Caco-2 (cell line): ENCODE measurements at regions of chr5 and their contacts with region 1.

Region 1: DNA sequence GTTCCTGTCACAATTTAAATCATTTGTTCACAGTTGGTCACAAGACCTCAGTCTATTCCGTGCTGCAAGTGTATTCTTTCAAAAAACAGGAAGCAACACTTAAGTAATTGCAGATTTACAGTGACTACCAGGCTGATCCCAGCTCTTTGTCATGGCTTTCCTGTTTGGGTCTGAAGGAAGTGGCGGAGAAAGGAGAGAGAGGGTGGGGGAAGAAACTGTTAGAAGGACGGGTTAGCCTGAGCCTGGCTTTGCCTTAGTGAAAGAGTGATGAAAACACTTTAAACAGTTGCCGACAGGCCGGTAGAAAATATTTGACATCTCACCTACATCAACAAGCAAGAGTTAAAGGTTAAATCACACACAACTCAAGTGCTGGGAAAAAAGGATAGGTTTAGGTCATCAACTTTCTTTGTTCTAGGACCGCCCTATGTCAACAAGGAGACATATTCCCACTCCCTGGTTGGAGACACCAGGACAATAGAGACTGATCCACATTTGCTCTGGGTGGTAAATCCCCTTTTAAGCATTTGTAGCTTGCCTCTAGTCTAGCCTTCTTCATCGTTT is 102.2 kb upstream of the DAB2 start:
- DNase-seq: peak; percentile 66 to 67
- H3K4me3 ChIP-seq: no peak overlapping the region
- H3K4me3 Mint-ChIP-seq: peak overlapping the region; percentile 32
- H3K27ac Mint-ChIP-seq: peak overlapping the region; percentile 83
- H3K4me1 ChIP-seq: peaks cover 53% of the 10 kb centered on the region
- H3K4me1 Mint-ChIP-seq: peaks cover 35% of the 10 kb centered on the region
- H3K27me3 ChIP-seq: no peaks in the 10 kb centered on the region
- H3K27me3 Mint-ChIP-seq: no peaks in the 10 kb centered on the region
- CTCF ChIP-seq: no peak

Region 2: DNA sequence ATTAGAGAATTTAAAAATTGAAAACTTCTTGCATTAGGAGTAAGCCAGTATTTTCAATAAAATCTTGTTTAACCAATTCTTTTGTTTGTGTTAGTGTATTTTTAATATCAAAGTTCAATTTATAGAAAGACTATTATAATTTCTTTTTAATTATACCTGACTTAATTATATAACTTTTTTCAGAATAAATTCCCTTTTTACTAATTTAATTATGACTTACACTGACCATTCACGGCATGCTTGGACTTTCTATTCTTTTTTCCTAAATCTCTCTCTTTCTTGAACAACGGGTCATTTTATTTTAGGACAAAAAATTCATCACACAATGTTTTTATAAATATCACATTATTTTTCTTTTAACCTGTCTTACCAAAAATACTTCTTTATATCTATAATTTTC is 597.4 kb after region 1 on chr5:
- CTCF ChIA-PET with region 1: no interaction called
- POLR2A ChIA-PET with region 1: interaction called, 10 read pairs
- intact Hi-C with region 1: no loop called
- DNase-seq: no peak
- H3K4me3 ChIP-seq: no peak overlapping the region
- H3K4me3 Mint-ChIP-seq: no peak overlapping the region
- H3K27ac Mint-ChIP-seq: no peak overlapping the region
- H3K4me1 ChIP-seq: no peaks in the 10 kb centered on the region
- H3K4me1 Mint-ChIP-seq: no peaks in the 10 kb centered on the region
- H3K27me3 ChIP-seq: no peaks in the 10 kb centered on the region
- H3K27me3 Mint-ChIP-seq: no peaks in the 10 kb centered on the region
- CTCF ChIP-seq: no peak

Region 3: GRCh38 chr5:40681363-40682153 is 1154.6 kb after region 1 on chr5:
- CTCF ChIA-PET with region 1: no interaction called
- POLR2A ChIA-PET with region 1: interaction called, 14 read pairs
- intact Hi-C with region 1: no loop called
- DNase-seq: no peak
- H3K4me3 ChIP-seq: no peak overlapping the region
- H3K4me3 Mint-ChIP-seq: peak overlapping the region; percentile 85
- H3K27ac Mint-ChIP-seq: no peak overlapping the region
- H3K4me1 ChIP-seq: peaks cover 9% of the 10 kb centered on the region
- H3K4me1 Mint-ChIP-seq: peaks cover 8% of the 10 kb centered on the region
- H3K27me3 ChIP-seq: peaks cover 13% of the 10 kb centered on the region
- H3K27me3 Mint-ChIP-seq: peaks cover 37% of the 10 kb centered on the region
- CTCF ChIP-seq: no peak